AG04449 (cell line): ENCODE measurements at regions of chr13 and their contacts with region 1.

Region 1: DNA sequence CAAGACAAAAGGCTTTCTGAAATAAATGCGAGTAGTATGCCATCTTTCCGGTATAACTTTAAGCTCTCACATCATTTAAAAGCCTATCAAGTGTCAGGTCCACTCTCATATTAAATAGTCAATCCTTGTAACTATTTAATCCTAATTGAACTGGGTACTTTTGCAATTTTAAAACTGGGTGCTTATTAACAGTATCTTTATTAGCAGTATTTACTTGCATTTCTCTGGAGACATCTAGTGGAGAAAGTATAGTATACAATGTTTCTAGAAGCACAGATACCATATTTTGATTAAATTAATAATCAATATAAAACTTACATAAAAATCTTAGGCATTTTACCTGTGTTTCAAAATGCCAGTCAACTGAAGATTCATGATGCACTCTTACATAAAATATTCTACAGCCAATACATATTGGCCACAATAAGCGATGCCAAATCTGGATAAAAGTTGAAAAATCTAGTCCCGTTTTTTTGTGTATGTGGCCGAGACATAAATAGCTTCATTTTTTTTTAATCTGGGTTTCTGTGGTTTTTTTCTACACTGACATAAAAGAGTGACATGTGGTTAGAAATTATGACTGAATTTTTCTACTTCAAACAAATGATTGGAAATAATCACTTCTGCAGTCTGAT is 4.3 kb upstream of the POSTN start:
- DNase-seq: no peak
- H3K4me3 ChIP-seq: no peak overlapping the region
- CTCF ChIP-seq: peak; percentile 24

Region 2: GRCh38 chr13:37068962-37069361 is 533.9 kb before region 1 on chr13:
- CTCF ChIA-PET with region 1: interaction called, 81 read pairs
- POLR2A ChIA-PET with region 1: interaction called, 3 read pairs
- DNase-seq: no peak
- H3K4me3 ChIP-seq: no peak overlapping the region
- CTCF ChIP-seq: no peak

Region 3: GRCh38 chr13:37074703-37075102 is 528.2 kb before region 1 on chr13:
- CTCF ChIA-PET with region 1: interaction called, 81 read pairs
- POLR2A ChIA-PET with region 1: interaction called, 3 read pairs
- DNase-seq: no peak
- H3K4me3 ChIP-seq: no peak overlapping the region
- CTCF ChIP-seq: no peak

Region 4: DNA sequence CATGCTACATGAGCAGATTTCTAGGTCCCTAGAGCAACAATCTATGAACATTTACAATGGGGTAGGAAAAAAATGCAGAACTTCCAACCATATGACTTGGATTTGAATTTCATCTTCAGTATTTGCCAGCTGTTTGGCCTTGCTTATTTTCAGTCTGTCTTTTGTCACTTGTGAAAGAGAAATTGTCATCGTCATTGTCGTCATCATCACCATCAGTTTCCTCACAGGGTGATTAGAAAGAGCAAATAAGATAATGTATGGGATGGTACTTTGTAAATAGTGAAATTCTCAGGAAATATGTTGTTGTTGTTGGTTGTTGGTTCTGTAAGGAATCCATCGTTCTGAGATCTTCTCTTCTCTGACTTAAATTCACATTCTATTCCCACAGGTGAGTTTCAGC is 522.0 kb before region 1 on chr13:
- CTCF ChIA-PET with region 1: interaction called, 81 read pairs
- POLR2A ChIA-PET with region 1: no interaction called
- DNase-seq: no peak
- H3K4me3 ChIP-seq: no peak overlapping the region
- CTCF ChIP-seq: no peak

Region 5: DNA sequence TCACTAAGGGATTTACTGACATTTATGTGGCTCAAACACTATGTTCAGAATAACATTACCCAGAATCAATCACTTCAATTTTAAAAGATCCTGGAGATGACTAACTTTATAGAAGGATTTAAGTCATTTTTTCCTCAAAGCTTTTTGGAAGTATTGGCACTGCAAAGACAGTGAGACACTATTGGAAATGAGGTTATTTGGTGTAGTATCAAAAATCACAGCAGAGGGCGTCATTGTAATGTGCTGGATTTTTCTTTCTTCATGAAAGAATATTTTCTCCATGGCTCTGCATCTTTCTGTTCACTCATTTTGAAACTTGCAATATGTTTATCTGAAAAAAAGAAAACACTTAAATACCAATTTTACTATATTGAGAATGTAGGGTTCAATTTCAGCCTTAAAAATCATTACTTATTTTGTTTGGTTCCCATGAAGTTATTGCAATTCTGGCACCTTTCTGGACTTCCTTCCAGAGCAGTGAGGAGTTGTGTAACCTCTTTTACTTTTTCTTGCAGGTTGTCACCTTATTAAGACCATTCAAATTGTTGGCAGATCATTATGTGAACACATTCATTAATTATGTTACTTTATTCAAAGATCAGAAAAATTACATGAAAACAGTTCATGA is 493.7 kb before region 1 on chr13:
- CTCF ChIA-PET with region 1: interaction called, 89 read pairs
- POLR2A ChIA-PET with region 1: no interaction called
- DNase-seq: no peak
- H3K4me3 ChIP-seq: no peak overlapping the region
- CTCF ChIP-seq: peak; percentile 45

Region 6: DNA sequence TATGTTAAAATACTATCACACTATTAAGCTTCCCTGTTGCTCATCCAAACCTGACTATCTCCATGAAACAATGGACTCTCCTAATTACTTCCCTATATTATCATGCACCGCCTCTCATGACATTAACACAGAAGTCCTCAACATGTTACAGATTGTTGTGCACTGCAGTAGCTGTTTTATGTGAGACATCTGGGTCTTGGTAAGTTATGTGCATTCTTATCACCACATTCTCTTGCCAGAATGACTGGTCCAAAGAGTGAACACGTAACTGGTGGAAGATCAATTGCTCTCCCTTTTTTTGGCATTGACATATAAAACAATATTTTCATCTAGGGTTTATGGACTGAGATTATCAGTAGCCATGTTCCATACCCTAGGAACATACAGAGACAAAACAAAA is 63.7 kb before region 1 on chr13:
- CTCF ChIA-PET with region 1: no interaction called
- POLR2A ChIA-PET with region 1: no interaction called
- DNase-seq: no peak
- H3K4me3 ChIP-seq: no peak overlapping the region
- CTCF ChIP-seq: no peak

Region 7: GRCh38 chr13:37617161-37617560 is 14.3 kb after region 1 on chr13:
- CTCF ChIA-PET with region 1: interaction called, 11 read pairs
- POLR2A ChIA-PET with region 1: no interaction called
- DNase-seq: peak; percentile 91
- H3K4me3 ChIP-seq: no peak overlapping the region
- CTCF ChIP-seq: no peak

Region 8: DNA sequence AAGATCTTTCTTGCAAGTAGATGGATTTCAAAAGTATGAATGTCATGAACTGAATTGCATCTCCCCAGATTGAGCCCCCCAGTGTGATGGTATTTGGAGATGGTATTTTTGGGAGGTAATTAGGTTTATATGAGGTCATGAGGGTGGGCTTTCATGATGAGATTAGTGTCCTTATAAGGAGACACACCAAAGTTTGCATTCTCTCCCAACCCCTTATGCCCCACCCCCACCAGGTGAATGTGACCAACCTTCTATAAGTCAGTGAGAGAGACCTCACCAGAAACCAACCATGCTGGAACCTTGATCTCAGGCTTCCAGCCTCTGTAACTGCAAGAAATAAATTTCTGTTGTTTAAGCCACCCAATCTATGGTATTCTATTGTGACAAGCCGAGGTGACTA is 67.0 kb after region 1 on chr13:
- CTCF ChIA-PET with region 1: no interaction called
- POLR2A ChIA-PET with region 1: no interaction called
- DNase-seq: no peak
- H3K4me3 ChIP-seq: no peak overlapping the region
- CTCF ChIP-seq: no peak